ENCODE measurements at regions of chr11 and their contacts with region 1.

Region 1: DNA sequence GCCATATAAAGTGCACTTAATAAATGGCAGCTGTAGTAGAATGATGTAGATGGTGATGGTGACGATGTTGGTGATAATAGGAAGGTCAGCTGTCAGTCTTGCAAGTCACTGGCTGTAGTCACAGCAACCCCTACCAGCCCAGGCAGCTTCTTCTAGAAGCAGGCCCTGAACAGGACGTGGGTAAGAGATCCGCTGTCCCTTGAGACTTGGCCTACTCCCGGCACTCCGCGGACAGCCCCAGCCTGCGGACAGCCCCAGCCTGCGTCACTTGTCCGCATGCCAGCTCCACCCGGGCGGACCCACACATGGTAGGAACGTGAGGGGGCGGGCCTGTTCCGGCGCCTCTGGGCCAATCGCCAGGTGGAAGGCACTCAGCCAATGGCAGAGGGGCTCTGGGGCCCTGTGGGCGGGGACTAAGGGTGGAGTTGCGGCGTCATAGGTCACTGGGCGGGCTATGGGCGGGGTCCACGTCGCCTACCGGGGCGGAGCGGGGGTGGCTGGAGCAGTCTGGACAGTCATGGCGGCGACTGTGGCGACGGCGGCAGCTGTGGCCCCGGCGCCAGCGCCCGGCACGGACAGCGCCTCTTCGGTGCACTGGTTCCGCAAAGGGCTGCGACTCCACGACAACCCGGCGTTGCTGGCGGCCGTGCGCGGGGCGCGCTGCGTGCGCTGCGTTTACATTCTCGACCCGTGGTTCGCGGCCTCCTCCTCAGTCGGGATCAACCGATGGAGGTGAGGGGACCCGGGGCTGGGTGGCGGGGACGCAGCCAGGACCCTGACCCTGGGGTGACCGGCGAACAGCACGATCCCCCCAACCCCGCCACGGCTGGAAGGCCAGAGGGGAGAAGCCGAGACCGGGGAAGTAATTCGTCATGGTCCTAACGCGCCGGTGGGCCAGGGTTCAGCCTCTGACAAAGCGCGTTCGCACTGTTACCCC is at the start of gene CRY2:
- H3K4me3 ChIP-seq: peak within 1 kb of the TSS; percentile 96
- H3K27ac ChIP-seq: no peak within 1 kb of the TSS
- H3K4me1 ChIP-seq: no peaks in the 10 kb centered on the region
- CTCF ChIP-seq: 0 out of 2 replicates have a peak, but pooled peaks have one; percentile 9

Region 2: GRCh38 chr11:45834298-45834756 is 12.9 kb before region 1 on chr11:
- CTCF ChIA-PET with region 1: interaction called, 14 read pairs
- POLR2A ChIA-PET with region 1: interaction called, 3 read pairs
- H3K4me3 ChIP-seq: no peak overlapping the region
- H3K27ac ChIP-seq: no peak overlapping the region
- H3K4me1 ChIP-seq: no peaks in the 10 kb centered on the region
- CTCF ChIP-seq: no peak

Region 3: GRCh38 chr11:45857961-45858474 is 10.8 kb after region 1 on chr11:
- CTCF ChIA-PET with region 1: interaction called, 10 read pairs
- POLR2A ChIA-PET with region 1: interaction called, 4 read pairs
- H3K4me3 ChIP-seq: no peak overlapping the region
- H3K27ac ChIP-seq: no peak overlapping the region
- H3K4me1 ChIP-seq: no peaks in the 10 kb centered on the region
- CTCF ChIP-seq: no peak

Region 4: GRCh38 chr11:45917623-45918330 is 70.5 kb after region 1 on chr11 and contains the start of gene PEX16:
- CTCF ChIA-PET with region 1: interaction called, 4 read pairs
- POLR2A ChIA-PET with region 1: interaction called, 10 read pairs
- H3K4me3 ChIP-seq: peak within 1 kb of the TSS; percentile 96
- H3K27ac ChIP-seq: peak within 1 kb of the TSS; percentile 46
- H3K4me1 ChIP-seq: no peaks in the 10 kb centered on the region; the same call in 1 of the 2 replicates
- CTCF ChIP-seq: no peak

Region 5: GRCh38 chr11:46026606-46027293 is 179.5 kb after region 1 on chr11:
- CTCF ChIA-PET with region 1: no interaction called
- POLR2A ChIA-PET with region 1: no interaction called
- H3K4me3 ChIP-seq: no peak overlapping the region
- H3K27ac ChIP-seq: no peak overlapping the region
- H3K4me1 ChIP-seq: no peaks in the 10 kb centered on the region
- CTCF ChIP-seq: no peak

Measured in HEK293 (cell line).